ENCODE measurements at regions of chr19 and their contacts with region 1.

Region 1: GRCh38 chr19:53659292-53659691 is 27.5 kb downstream of the DPRX start:
- DNase-seq: peak; percentile 69
- ATAC-seq: peak; percentile 86
- H3K4me3 Mint-ChIP-seq: no peak overlapping the region
- H3K27ac Mint-ChIP-seq: peak overlapping the region; percentile 93
- H3K4me1 Mint-ChIP-seq: peaks cover 43% of the 10 kb centered on the region
- H3K27me3 Mint-ChIP-seq: peaks cover 8% of the 10 kb centered on the region
- CTCF ChIP-seq: peak; percentile 35; the same call in 1 of the 2 replicates

Region 2: DNA sequence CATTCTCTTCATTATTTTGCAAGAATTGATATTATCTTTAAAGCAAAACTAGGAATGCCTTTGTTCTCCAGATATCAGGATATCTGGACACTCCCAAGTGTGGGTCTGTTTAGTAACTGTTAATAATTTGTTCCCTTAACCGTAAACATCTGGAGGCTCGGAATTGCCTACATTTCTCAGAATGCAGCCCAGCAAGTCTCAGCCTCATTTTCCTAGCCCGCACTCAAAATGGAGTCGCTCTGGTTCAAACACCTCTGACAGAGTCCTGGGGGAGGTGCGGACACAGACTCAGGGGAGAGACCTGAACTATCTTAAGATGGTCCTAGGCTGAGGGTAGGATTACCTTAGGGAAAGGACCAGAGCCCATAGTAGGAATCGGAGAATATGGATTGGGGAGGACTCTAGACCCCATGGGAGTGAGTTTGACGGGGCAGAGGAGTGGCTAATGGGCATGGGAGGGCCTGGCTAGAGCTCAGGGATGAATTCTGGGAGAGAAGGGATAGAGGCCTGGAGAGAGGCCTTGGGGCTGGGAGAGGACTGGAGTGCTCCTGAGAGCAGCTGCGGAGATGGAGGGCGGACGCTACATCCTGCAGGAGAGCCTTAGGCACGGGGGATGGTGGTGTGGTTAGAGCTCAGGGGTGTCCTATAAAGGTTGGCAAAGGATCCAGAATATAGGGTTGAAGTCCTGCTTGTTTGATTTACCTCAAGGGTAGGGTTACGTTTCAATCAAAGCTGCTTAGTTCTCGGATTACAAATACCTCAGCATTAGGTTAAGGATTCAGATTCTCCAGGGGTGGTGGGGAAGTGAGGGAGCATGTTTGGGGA is 78.1 kb before region 1 on chr19:
- CTCF ChIA-PET with region 1: interaction called, 22 read pairs
- POLR2A ChIA-PET with region 1: interaction called, 3 read pairs
- DNase-seq: peak; percentile 22
- ATAC-seq: peak; percentile 72
- H3K4me3 Mint-ChIP-seq: no peak overlapping the region
- H3K27ac Mint-ChIP-seq: peak overlapping the region; percentile 91
- H3K4me1 Mint-ChIP-seq: peaks cover 20% of the 10 kb centered on the region
- H3K27me3 Mint-ChIP-seq: no peaks in the 10 kb centered on the region
- CTCF ChIP-seq: no peak

Region 3: GRCh38 chr19:53646144-53646543 is 13.1 kb before region 1 on chr19:
- CTCF ChIA-PET with region 1: interaction called, 15 read pairs
- POLR2A ChIA-PET with region 1: no interaction called
- DNase-seq: no peak
- ATAC-seq: no peak; the same call in 1 of the 2 replicates
- H3K4me3 Mint-ChIP-seq: no peak overlapping the region
- H3K27ac Mint-ChIP-seq: peak overlapping the region; percentile 44; the same call in 1 of the 2 replicates
- H3K4me1 Mint-ChIP-seq: peaks cover 35% of the 10 kb centered on the region
- H3K27me3 Mint-ChIP-seq: peaks cover 4% of the 10 kb centered on the region; the same call in 1 of the 2 replicates
- CTCF ChIP-seq: no peak